Activated CD4-positive, alpha-beta memory T cell treated with anti-CD3 and anti-CD28 coated beads for 36 hours (primary cell): ENCODE measurements at regions of chr15 and their contacts with region 1.

Region 1: DNA sequence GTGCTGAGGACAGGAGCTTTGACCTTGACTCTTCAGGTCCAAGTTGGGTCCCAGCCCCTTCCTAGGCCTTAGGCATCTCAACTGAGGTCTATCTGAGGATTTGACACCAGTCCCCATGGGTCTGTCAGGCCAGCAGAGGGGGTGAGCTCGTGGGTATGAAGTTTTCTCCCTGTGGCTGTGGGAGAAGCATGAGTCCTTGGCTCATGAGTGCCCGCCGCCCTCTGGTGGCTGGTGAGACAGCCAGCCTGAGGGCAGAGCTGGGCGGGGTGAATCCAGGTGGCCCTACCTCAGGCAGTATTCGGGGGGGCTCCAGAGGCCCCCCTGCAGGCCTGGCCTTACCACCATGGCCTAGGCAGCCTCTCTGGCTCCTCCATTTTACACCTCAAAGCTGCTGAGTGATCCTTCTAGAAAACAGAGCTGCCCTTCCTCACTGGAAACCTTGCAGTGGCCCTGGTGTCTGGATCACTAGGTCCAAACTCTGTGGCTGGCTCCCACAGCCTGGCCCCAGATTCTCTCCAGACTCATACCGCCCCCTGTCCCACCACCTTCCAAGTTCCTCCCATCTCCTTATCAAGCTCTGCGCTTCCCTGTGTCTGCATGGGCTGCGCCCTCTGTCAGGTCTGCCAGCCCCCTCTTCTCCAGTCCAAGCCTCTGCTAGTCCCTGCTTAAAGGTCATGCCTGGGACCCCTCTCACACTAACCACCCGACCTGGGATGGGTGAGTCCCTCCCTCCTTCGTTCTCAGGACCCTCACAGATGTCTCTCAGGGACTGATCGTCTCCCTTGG is 16.1 kb downstream of the SH2D7 start:
- DNase-seq: peak; percentile 88
- H3K4me3 Mint-ChIP-seq: no peak overlapping the region
- H3K27ac Mint-ChIP-seq: no peak overlapping the region
- H3K4me1 Mint-ChIP-seq: peaks cover 31% of the 10 kb centered on the region
- H3K27me3 Mint-ChIP-seq: no peaks in the 10 kb centered on the region

Region 2: GRCh38 chr15:77901974-77902750 is 206.3 kb before region 1 on chr15:
- CTCF ChIA-PET with region 1: no interaction called
- POLR2A ChIA-PET with region 1: no interaction called
- intact Hi-C with region 1: no loop called
- DNase-seq: no peak
- H3K4me3 Mint-ChIP-seq: no peak overlapping the region
- H3K27ac Mint-ChIP-seq: no peak overlapping the region
- H3K4me1 Mint-ChIP-seq: no peaks in the 10 kb centered on the region
- H3K27me3 Mint-ChIP-seq: peaks cover 7% of the 10 kb centered on the region

Region 3: DNA sequence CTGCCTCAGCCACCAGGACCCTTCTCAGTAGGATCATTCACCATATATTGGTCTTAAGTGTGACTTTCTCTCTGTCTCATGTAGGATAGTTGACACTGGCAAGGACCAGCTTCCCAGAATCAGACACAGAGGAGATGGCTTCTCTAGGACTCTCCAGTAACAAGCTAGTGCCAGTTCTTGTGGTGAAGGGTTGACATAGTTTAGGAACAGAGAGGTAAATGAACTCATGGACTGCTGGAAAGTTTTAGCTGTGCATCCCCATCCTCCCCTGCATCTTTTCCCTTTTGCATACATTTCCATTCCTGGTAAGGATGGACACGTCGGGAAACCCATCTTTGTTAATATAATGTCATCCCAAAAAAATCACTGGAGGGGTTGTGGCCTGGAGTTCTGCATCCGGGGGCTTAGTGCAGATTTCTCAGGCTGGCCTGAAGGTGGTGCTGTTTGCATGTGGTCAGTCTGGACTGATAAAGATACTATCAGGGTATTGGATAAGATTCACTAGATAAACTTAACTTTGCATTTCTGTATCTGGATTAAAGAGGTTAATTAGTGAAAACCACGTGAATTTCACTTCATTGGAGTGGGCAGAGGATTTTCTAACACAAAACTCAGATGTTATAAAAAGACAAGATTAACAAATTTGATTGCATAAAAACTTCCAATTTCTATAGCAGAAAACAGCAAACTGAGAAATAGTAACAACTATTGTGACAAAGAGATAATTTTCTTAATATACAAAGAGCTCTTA is 141.8 kb before region 1 on chr15:
- CTCF ChIA-PET with region 1: interaction called, 140 read pairs
- POLR2A ChIA-PET with region 1: no interaction called
- intact Hi-C with region 1: loop called (anchors 1 kb)
- DNase-seq: peak; percentile 67
- H3K4me3 Mint-ChIP-seq: no peak overlapping the region
- H3K27ac Mint-ChIP-seq: no peak overlapping the region
- H3K4me1 Mint-ChIP-seq: no peaks in the 10 kb centered on the region
- H3K27me3 Mint-ChIP-seq: peaks cover 3% of the 10 kb centered on the region

Region 4: GRCh38 chr15:78018946-78019644 is 89.4 kb before region 1 on chr15:
- CTCF ChIA-PET with region 1: interaction called, 24 read pairs
- POLR2A ChIA-PET with region 1: no interaction called
- intact Hi-C with region 1: no loop called
- DNase-seq: no peak
- H3K4me3 Mint-ChIP-seq: no peak overlapping the region
- H3K27ac Mint-ChIP-seq: no peak overlapping the region
- H3K4me1 Mint-ChIP-seq: peaks cover 18% of the 10 kb centered on the region
- H3K27me3 Mint-ChIP-seq: no peaks in the 10 kb centered on the region

Region 5: GRCh38 chr15:78049691-78050440 is 58.6 kb before region 1 on chr15:
- CTCF ChIA-PET with region 1: interaction called, 10 read pairs
- POLR2A ChIA-PET with region 1: interaction called, 3 read pairs
- intact Hi-C with region 1: loop called (anchors 5 kb)
- DNase-seq: peak; percentile 83
- H3K4me3 Mint-ChIP-seq: peak overlapping the region; percentile 30
- H3K27ac Mint-ChIP-seq: peak overlapping the region; percentile 92
- H3K4me1 Mint-ChIP-seq: peaks cover 99% of the 10 kb centered on the region
- H3K27me3 Mint-ChIP-seq: no peaks in the 10 kb centered on the region

Region 6: DNA sequence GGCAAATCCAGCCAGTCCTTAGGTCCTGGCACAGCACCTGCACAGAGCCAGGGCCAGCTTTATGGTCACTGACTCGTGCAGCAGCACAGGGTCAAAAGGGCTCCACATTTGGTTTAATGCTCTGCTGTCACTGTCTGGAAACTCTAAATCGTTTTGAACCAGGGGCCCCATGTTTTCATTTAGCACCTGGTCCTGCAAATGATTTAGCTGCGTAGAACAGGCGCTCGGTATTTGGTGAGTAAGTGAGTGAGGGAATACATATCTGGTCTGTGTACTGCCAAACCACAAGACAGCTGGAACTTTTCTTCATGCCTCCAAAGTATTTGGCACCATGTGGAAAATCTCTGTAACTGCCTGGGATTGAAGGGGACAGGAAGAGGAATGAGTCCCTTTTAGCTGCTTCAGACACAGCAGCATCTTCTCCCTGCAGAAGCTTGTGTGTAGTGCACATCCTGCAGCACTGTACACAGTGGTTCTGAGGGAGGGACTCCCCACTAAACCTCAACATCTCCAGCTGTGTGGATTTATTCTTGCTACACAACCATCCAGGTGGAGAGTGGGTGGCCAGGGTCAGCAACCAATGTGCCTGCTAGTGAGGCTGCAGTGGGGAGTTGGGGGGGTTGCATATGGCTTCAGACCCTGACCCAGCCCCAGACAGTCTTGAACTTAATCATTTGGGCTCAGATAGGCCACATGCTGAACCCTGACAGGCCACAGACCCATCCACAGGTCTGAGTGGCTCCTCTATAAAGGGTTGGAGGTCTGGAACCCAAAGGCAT is 15.1 kb before region 1 on chr15:
- CTCF ChIA-PET with region 1: interaction called, 18 read pairs
- POLR2A ChIA-PET with region 1: interaction called, 4 read pairs
- intact Hi-C with region 1: no loop called
- DNase-seq: peak; percentile 7
- H3K4me3 Mint-ChIP-seq: no peak overlapping the region
- H3K27ac Mint-ChIP-seq: no peak overlapping the region
- H3K4me1 Mint-ChIP-seq: no peaks in the 10 kb centered on the region
- H3K27me3 Mint-ChIP-seq: no peaks in the 10 kb centered on the region

Region 7: GRCh38 chr15:78162038-78162437 is 53.5 kb after region 1 on chr15:
- CTCF ChIA-PET with region 1: no interaction called
- POLR2A ChIA-PET with region 1: no interaction called
- intact Hi-C with region 1: no loop called
- DNase-seq: peak; percentile 74
- H3K4me3 Mint-ChIP-seq: no peak overlapping the region
- H3K27ac Mint-ChIP-seq: peak overlapping the region; percentile 74
- H3K4me1 Mint-ChIP-seq: peaks cover 13% of the 10 kb centered on the region
- H3K27me3 Mint-ChIP-seq: no peaks in the 10 kb centered on the region

Region 8: GRCh38 chr15:78241007-78241406 is 132.5 kb after region 1 on chr15:
- CTCF ChIA-PET with region 1: interaction called, 136 read pairs
- POLR2A ChIA-PET with region 1: no interaction called
- intact Hi-C with region 1: loop called (anchors 1 kb)
- DNase-seq: peak; percentile 91
- H3K4me3 Mint-ChIP-seq: no peak overlapping the region
- H3K27ac Mint-ChIP-seq: no peak overlapping the region
- H3K4me1 Mint-ChIP-seq: peaks cover 2% of the 10 kb centered on the region
- H3K27me3 Mint-ChIP-seq: peaks cover 1% of the 10 kb centered on the region

Region 9: GRCh38 chr15:78481917-78482316 is 373.4 kb after region 1 on chr15:
- CTCF ChIA-PET with region 1: no interaction called
- POLR2A ChIA-PET with region 1: no interaction called
- intact Hi-C with region 1: no loop called
- DNase-seq: no peak
- H3K4me3 Mint-ChIP-seq: no peak overlapping the region
- H3K27ac Mint-ChIP-seq: no peak overlapping the region
- H3K4me1 Mint-ChIP-seq: peaks cover 4% of the 10 kb centered on the region
- H3K27me3 Mint-ChIP-seq: no peaks in the 10 kb centered on the region

Region 10: GRCh38 chr15:79756365-79756764 is 1647.9 kb after region 1 on chr15:
- CTCF ChIA-PET with region 1: no interaction called
- POLR2A ChIA-PET with region 1: no interaction called
- intact Hi-C with region 1: no loop called
- DNase-seq: no peak
- H3K4me3 Mint-ChIP-seq: no peak overlapping the region
- H3K27ac Mint-ChIP-seq: no peak overlapping the region
- H3K4me1 Mint-ChIP-seq: no peaks in the 10 kb centered on the region
- H3K27me3 Mint-ChIP-seq: peaks cover 4% of the 10 kb centered on the region